Endothelial cell of umbilical vein (primary cell): ENCODE measurements at regions of chr5 and their contacts with region 1.

Region 1: DNA sequence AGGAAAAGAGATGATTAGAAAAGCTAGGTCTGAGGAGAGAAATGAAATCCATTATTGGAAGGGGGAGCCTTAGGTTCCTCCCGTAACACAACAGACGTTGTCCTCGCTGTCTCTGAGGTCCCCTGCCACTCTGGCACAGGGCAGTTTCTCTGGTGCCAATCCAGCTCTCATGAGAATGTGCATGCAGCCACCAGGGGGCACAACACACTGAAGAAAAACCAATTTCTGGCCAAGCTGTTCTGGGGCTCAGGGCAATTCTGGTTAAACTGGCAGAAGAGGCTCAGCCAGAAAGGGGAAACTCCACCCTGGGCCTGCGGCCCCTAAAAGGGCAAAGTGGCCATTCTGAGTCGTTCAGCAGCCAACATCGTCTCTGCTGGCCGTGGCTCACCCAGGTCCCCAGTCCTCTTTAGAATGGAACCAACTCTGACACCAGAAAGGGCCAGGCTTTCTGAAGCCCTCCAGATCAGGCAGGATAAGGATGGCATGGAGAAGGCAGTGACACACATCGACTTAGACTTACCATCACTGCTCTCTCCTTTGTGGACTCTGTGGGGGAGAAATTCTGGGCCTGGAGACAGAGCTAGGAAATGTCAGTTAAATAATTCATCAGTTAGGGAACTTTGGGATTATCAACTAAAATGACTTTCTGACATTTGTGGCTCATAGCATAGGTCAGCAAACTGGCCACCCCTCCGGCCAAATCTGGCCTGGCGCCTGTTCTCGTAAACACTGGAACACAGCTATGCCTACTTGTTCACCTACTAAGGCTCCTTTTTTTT is 58.5 kb upstream of the GOLPH3 start:
- DNase-seq: peak; percentile 77
- H3K4me3 ChIP-seq: no peak overlapping the region
- H3K27ac ChIP-seq: no peak overlapping the region
- H3K4me1 ChIP-seq: peaks cover 16% of the 10 kb centered on the region
- H3K27me3 ChIP-seq: no peaks in the 10 kb centered on the region
- CTCF ChIP-seq: peak; percentile 79 to 84
- POLR2A ChIP-seq: no peak

Region 2: GRCh38 chr5:32174011-32174870 is 58.4 kb before region 1 on chr5 and contains the start of gene GOLPH3:
- CTCF ChIA-PET with region 1: interaction called, 10 read pairs
- POLR2A ChIA-PET with region 1: no interaction called
- dilution Hi-C with region 1: no loop called
- intact Hi-C with region 1: loop called (anchors 1 kb)
- DNase-seq: peak; percentile 82
- H3K4me3 ChIP-seq: peak within 1 kb of the TSS; percentile 89 to 99 (median 96)
- H3K27ac ChIP-seq: peak within 1 kb of the TSS; percentile 91
- H3K4me1 ChIP-seq: peaks cover 17% of the 10 kb centered on the region
- H3K27me3 ChIP-seq: peaks cover 0 to 2% of the 10 kb centered on the region in 2 experiments
- CTCF ChIP-seq: no peak
- POLR2A ChIP-seq: peak; percentile 97
- total RNA-seq, gene GOLPH3: 67.2 and 70.2 TPM in 2 replicates

Region 3: DNA sequence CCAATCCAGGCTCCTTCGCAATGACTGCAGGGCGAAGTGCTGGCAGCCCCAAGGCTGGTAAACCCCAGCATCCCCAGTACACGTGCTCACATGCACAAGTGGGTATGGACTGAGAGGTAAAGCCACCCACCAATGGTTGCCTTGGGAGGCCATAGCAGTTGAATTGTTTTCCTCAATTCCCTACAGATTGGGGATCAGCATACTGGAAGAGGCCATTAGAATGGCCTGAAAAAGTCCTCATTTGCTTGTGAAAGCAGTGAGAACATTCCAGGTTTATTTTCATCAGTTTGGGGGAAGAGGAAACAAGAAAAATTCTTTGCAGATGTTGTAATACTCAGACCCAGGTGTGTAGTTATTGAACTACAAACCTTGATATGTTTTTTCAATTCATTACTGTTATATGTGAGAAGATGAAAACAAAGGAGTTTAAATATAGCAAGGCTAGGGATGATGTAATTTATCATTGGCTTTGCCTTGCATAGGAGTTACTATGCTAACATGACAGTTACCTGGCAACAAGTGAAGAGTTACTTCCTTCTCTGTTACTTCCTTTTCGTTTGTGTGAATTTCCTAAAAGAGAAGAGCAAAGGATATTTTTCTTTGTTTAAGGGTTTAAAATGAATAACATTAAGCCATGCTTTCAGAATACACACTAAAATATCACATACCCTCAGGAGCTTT is 43.7 kb after region 1 on chr5:
- CTCF ChIA-PET with region 1: interaction called, 7 read pairs
- POLR2A ChIA-PET with region 1: interaction called, 4 read pairs
- dilution Hi-C with region 1: no loop called
- intact Hi-C with region 1: loop called (anchors 2 kb)
- DNase-seq: peak; percentile 91
- H3K4me3 ChIP-seq: no peak overlapping the region
- H3K27ac ChIP-seq: peak overlapping the region; percentile 100
- H3K4me1 ChIP-seq: peaks cover 41% of the 10 kb centered on the region
- H3K27me3 ChIP-seq: no peaks in the 10 kb centered on the region
- CTCF ChIP-seq: no peak
- POLR2A ChIP-seq: no peak

Region 4: DNA sequence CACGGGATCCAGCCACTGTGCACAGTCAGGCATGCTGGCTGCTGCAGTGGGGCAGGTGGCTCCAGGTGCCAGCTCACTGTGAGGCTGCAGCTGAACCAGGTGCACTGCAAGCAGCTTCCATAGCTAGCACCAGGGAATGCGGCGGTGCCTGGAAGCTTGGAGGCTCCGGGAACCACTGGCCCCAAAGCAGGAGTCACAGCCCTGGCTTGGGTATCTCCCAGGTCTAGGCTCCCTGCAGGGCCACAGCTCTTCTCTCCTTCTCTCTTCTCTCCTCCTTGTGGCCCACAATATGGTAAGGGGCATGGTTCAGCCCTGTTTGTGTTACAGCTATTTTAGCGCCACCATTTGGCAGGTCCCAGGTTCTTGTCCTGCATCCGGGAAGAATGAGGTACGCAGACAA is 86.8 kb after region 1 on chr5:
- CTCF ChIA-PET with region 1: interaction called, 16 read pairs
- POLR2A ChIA-PET with region 1: no interaction called
- dilution Hi-C with region 1: no loop called
- intact Hi-C with region 1: no loop called
- DNase-seq: no peak
- H3K4me3 ChIP-seq: no peak overlapping the region
- H3K27ac ChIP-seq: no peak overlapping the region
- H3K4me1 ChIP-seq: no peaks in the 10 kb centered on the region
- H3K27me3 ChIP-seq: no peaks in the 10 kb centered on the region
- CTCF ChIP-seq: no peak
- POLR2A ChIP-seq: no peak

Region 5: GRCh38 chr5:32369542-32370155 is 137.0 kb after region 1 on chr5:
- CTCF ChIA-PET with region 1: interaction called, 10 read pairs
- POLR2A ChIA-PET with region 1: no interaction called
- dilution Hi-C with region 1: no loop called
- intact Hi-C with region 1: loop called (anchors 5 kb)
- DNase-seq: no peak
- H3K4me3 ChIP-seq: no peak overlapping the region
- H3K27ac ChIP-seq: no peak overlapping the region
- H3K4me1 ChIP-seq: no peaks in the 10 kb centered on the region
- H3K27me3 ChIP-seq: no peaks in the 10 kb centered on the region
- CTCF ChIP-seq: no peak
- POLR2A ChIP-seq: no peak

Region 6: GRCh38 chr5:32613050-32613672 is 380.5 kb after region 1 on chr5:
- CTCF ChIA-PET with region 1: interaction called, 7 read pairs
- POLR2A ChIA-PET with region 1: no interaction called
- dilution Hi-C with region 1: no loop called
- intact Hi-C with region 1: loop called (anchors 1 kb)
- DNase-seq: peak; percentile 85
- H3K4me3 ChIP-seq: no peak overlapping the region
- H3K27ac ChIP-seq: no peak overlapping the region
- H3K4me1 ChIP-seq: peaks cover 7% of the 10 kb centered on the region
- H3K27me3 ChIP-seq: no peaks in the 10 kb centered on the region
- CTCF ChIP-seq: peak; percentile 78 to 86
- POLR2A ChIP-seq: no peak